ENCODE measurements at regions of chr9 and their contacts with region 1.

Region 1: GRCh38 chr9:93108291-93109041 is 12.4 kb downstream of the CARD19 start:
- DNase-seq: peak; percentile 66
- ATAC-seq: peak; percentile 80
- H3K4me3 Mint-ChIP-seq: no peak overlapping the region
- H3K27ac Mint-ChIP-seq: no peak overlapping the region
- H3K4me1 Mint-ChIP-seq: peaks cover 42% of the 10 kb centered on the region
- H3K27me3 Mint-ChIP-seq: no peaks in the 10 kb centered on the region
- CTCF ChIP-seq: no peak

Region 2: GRCh38 chr9:92650839-92651621 is 457.4 kb before region 1 on chr9:
- CTCF ChIA-PET with region 1: no interaction called
- POLR2A ChIA-PET with region 1: no interaction called
- intact Hi-C with region 1: no loop called
- DNase-seq: no peak
- ATAC-seq: no peak
- H3K4me3 Mint-ChIP-seq: no peak overlapping the region
- H3K27ac Mint-ChIP-seq: no peak overlapping the region
- H3K4me1 Mint-ChIP-seq: peaks cover 3% of the 10 kb centered on the region
- H3K27me3 Mint-ChIP-seq: no peaks in the 10 kb centered on the region
- CTCF ChIP-seq: no peak

Region 3: DNA sequence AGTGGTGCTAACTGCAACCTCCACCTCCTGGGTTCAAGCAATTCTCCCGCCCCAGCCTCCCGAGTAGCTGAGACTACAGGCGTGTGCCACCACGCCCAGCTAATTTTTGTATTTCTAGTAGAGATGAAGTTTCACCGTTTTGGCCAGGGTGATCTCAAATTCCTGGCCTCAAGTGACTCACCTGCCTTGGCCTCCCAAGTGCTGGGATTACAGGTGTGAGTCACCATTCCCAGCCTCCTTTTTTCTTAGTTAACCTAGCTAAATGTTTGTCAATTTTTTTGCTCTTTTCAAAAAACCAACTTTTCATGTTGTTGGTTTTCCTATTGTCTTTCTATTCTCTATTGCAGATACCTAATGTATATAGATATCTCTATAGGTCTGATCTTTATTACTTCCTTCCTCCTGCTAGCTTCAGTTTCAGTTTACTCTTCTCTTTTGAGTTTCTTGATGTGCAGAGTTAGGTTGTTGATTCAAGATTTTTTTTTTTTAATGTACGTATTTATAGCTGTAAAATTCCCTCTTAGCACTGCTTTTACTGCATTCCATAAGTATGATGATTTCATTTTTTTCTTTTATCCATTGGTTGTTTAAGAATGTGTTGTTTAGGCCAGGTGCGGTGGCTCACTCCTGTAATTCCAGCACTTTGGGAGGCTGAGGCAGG is 128.3 kb before region 1 on chr9:
- CTCF ChIA-PET with region 1: no interaction called
- POLR2A ChIA-PET with region 1: no interaction called
- intact Hi-C with region 1: no loop called
- DNase-seq: no peak
- ATAC-seq: peak; percentile 17
- H3K4me3 Mint-ChIP-seq: peak overlapping the region; percentile 21
- H3K27ac Mint-ChIP-seq: peak overlapping the region; percentile 88
- H3K4me1 Mint-ChIP-seq: peaks cover 71% of the 10 kb centered on the region
- H3K27me3 Mint-ChIP-seq: no peaks in the 10 kb centered on the region
- CTCF ChIP-seq: no peak

Region 4: GRCh38 chr9:93058355-93059096 is 49.9 kb before region 1 on chr9 and contains the start of gene SUSD3:
- CTCF ChIA-PET with region 1: interaction called, 12 read pairs
- POLR2A ChIA-PET with region 1: no interaction called
- intact Hi-C with region 1: no loop called
- DNase-seq: peak; percentile 76
- ATAC-seq: peak; percentile 63
- H3K4me3 Mint-ChIP-seq: peak within 1 kb of the TSS; percentile 86
- H3K27ac Mint-ChIP-seq: peak within 1 kb of the TSS; percentile 97
- H3K4me1 Mint-ChIP-seq: peaks cover 51% of the 10 kb centered on the region
- H3K27me3 Mint-ChIP-seq: no peaks in the 10 kb centered on the region
- CTCF ChIP-seq: no peak
- total RNA-seq, gene SUSD3: 34.6 to 36.7 TPM

Region 5: GRCh38 chr9:93119953-93120845 is 11.7 kb after region 1 on chr9:
- CTCF ChIA-PET with region 1: interaction called, 48 read pairs
- POLR2A ChIA-PET with region 1: interaction called, 22 read pairs
- intact Hi-C with region 1: no loop called
- DNase-seq: peak; percentile 75
- ATAC-seq: peak; percentile 91
- H3K4me3 Mint-ChIP-seq: no peak overlapping the region
- H3K27ac Mint-ChIP-seq: peak overlapping the region; percentile 79
- H3K4me1 Mint-ChIP-seq: peaks cover 17% of the 10 kb centered on the region
- H3K27me3 Mint-ChIP-seq: no peaks in the 10 kb centered on the region
- CTCF ChIP-seq: peak; percentile 42

Region 6: GRCh38 chr9:93134015-93134739 is 25.7 kb after region 1 on chr9 and contains the start of gene NINJ1:
- CTCF ChIA-PET with region 1: interaction called, 25 read pairs
- POLR2A ChIA-PET with region 1: interaction called, 4 read pairs
- intact Hi-C with region 1: no loop called
- DNase-seq: peak; percentile 95
- ATAC-seq: peak; percentile 79
- H3K4me3 Mint-ChIP-seq: peak within 1 kb of the TSS; percentile 91
- H3K27ac Mint-ChIP-seq: peak within 1 kb of the TSS; percentile 93
- H3K4me1 Mint-ChIP-seq: peaks cover 59% of the 10 kb centered on the region
- H3K27me3 Mint-ChIP-seq: no peaks in the 10 kb centered on the region
- CTCF ChIP-seq: no peak
- total RNA-seq, gene NINJ1: 118 to 120 TPM

Region 7: GRCh38 chr9:93154315-93154903 is 45.9 kb after region 1 on chr9:
- CTCF ChIA-PET with region 1: interaction called, 15 read pairs
- POLR2A ChIA-PET with region 1: interaction called, 5 read pairs
- intact Hi-C with region 1: no loop called
- DNase-seq: peak; percentile 65
- ATAC-seq: peak; percentile 62
- H3K4me3 Mint-ChIP-seq: no peak overlapping the region
- H3K27ac Mint-ChIP-seq: no peak overlapping the region
- H3K4me1 Mint-ChIP-seq: peaks cover 17% of the 10 kb centered on the region
- H3K27me3 Mint-ChIP-seq: no peaks in the 10 kb centered on the region
- CTCF ChIP-seq: peak; percentile 77